H1 (cell line): ENCODE measurements at regions of chr10 and their contacts with region 1.

Region 1: GRCh38 chr10:13327534-13327933 is 20.6 kb downstream of the SEPHS1 start:
- DNase-seq: no peak
- H3K4me3 ChIP-seq: no peak overlapping the region
- H3K27ac ChIP-seq: no peak overlapping the region
- H3K4me1 ChIP-seq: peaks cover 4 to 8% (median 5%) of the 10 kb centered on the region in 4 experiments; a peak in 6 of 7 replicates
- H3K27me3 ChIP-seq: no peaks in the 10 kb centered on the region
- CTCF ChIP-seq: no peak
- EP300 ChIP-seq: no peak
- POLR2A ChIP-seq: no peak
- RAD21 ChIP-seq: no peak

Region 2: DNA sequence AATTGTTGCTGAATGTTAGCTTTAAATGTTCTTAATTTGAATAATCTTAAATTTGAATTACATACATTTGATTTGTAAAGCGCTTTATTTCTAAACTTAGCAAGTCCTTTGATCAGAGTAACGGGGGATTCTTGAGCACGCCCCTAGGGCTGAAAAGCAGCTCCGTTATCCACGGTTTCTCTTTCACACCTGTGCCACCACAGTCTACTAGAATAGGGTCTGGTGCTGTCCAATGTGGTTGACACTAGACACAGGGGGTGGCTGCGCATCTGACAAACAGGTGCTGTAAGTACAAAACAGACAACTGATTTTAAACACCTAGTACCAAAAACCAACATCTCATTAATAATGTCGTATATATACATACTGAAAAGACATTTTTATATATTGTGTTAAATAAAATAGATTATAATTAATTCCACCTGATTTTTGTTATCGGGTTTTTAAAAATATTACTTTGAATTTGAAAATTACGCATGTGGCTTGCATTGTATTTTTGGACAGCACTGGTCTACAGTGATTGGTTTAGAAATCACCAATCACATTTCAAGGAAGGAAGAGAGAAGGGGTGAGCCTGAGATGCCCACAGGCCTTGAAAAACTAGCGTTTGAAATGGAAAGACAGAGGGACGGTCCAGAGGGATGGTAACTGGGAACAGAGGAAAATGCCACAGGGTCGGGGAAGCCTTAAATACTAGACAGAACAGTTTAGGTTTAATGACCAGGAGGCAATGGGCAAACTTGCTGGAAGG is 13.3 kb after region 1 on chr10:
- CTCF ChIA-PET with region 1: interaction called, 6 read pairs
- POLR2A ChIA-PET with region 1: interaction called, 50 read pairs
- DNase-seq: no peak
- H3K4me3 ChIP-seq: no peak overlapping the region
- H3K27ac ChIP-seq: no peak overlapping the region
- H3K4me1 ChIP-seq: peaks cover 3 to 24% (median 12%) of the 10 kb centered on the region in 4 experiments; a peak in 6 of 7 replicates
- H3K27me3 ChIP-seq: no peaks in the 10 kb centered on the region
- CTCF ChIP-seq: no peak
- EP300 ChIP-seq: no peak
- POLR2A ChIP-seq: no peak
- RAD21 ChIP-seq: no peak

Region 3: GRCh38 chr10:13470270-13470669 is 142.7 kb after region 1 on chr10:
- CTCF ChIA-PET with region 1: no interaction called
- POLR2A ChIA-PET with region 1: no interaction called
- DNase-seq: no peak
- H3K4me3 ChIP-seq: no peak overlapping the region
- H3K27ac ChIP-seq: no peak overlapping the region
- H3K4me1 ChIP-seq: no peaks in the 10 kb centered on the region
- H3K27me3 ChIP-seq: no peaks in the 10 kb centered on the region
- CTCF ChIP-seq: peak in 2 of 3 experiments; percentile 22 to 53; a peak in 2 of 4 replicates
- EP300 ChIP-seq: no peak
- POLR2A ChIP-seq: no peak
- RAD21 ChIP-seq: peak in 1 of 2 experiments; percentile 14; a peak in 1 of 4 replicates